ENCODE measurements at regions of chr3 and their contacts with region 1.

Region 1: GRCh38 chr3:20039766-20040475 is at the start of gene KAT2B:
- DNase-seq: no peak
- ATAC-seq: peak; percentile 76
- H3K4me3 ChIP-seq: peak within 1 kb of the TSS; percentile 54 to 66
- H3K27ac ChIP-seq: peak within 1 kb of the TSS; percentile 53; the same call in 1 of the 2 replicates
- H3K4me1 ChIP-seq: peaks cover 8 to 20% of the 10 kb centered on the region in 2 experiments; a peak in 3 of 4 replicates
- H3K27me3 ChIP-seq: no peaks in the 10 kb centered on the region
- CTCF ChIP-seq: peak in 2 of 3 experiments; percentile 50 to 56; a peak in 4 of 6 replicates
- POLR2A ChIP-seq: no peak
- RAD21 ChIP-seq: no peak
- total RNA-seq, gene KAT2B: 3.7 TPM

Region 2: DNA sequence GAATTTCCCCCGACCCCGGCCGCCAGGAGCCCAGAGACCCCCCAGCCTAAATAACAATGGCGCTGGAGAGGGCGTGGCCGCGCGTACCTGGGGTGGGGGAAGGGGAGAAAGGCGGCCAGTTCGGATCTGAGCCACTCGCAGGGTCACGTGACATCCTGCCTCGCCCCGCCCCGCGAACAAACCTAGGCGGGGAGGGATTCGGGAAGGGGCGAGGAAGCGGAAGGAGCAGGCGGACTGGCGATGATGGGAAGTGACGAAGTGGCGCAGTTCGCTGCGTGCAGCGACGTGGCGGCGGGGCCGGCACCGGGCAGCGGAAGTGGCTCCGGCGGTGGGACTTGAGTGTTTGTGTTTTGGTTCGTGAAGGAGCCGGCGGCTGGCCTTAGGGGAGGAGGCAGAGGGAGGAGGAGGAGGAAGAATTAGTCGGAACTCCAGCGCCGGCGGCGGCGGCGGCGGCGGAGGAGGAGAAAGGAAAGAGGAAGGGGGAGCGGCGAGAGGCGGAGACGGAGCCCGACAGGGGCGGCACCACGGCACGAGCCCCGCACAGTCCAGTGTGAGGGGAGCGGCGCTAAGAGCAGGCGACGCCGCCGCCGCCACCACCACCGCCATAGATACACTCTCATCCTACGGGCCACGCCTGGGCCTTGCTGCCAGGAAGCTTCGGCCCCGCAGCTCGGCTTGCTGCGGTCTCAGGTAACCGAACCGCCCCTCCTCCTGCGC is 92.9 kb before region 1 on chr3 and contains the start of gene RAB5A:
- CTCF ChIA-PET with region 1: no interaction called
- POLR2A ChIA-PET with region 1: interaction called, 3 read pairs
- RAD21 ChIA-PET with region 1: no interaction called
- intact Hi-C with region 1: loop called (anchors 1 kb)
- DNase-seq: peak; percentile 95
- ATAC-seq: peak; percentile 90
- H3K4me3 ChIP-seq: peak within 1 kb of the TSS; percentile 89 to 93
- H3K27ac ChIP-seq: peak within 1 kb of the TSS; percentile 96
- H3K4me1 ChIP-seq: peaks cover 7 to 14% of the 10 kb centered on the region in 2 experiments; a peak in 3 of 4 replicates
- H3K27me3 ChIP-seq: no peaks in the 10 kb centered on the region
- CTCF ChIP-seq: no peak
- POLR2A ChIP-seq: no peak
- RAD21 ChIP-seq: no peak
- total RNA-seq, gene RAB5A: 45.0 TPM

Region 3: DNA sequence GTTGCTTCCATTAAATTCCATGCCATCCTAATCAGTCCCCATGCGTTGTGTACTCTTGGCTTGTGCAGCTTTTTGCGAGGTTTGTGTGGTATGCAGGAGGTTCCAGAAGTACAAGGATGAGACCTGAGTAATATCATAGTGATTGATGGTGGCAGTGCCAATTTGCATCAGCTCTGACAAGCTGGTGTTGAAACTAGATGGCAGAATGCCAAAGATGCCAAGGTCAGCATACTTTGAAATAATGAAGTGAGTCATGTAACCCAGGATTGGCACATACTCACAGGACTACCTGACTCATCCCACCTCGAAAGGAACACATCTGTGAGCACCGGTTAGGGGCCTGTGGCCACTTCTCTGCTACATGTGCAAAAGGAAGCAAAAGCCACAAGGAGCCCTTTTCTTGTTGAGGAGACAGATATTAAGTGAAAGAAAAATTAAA is 14.6 kb after region 1 on chr3:
- CTCF ChIA-PET with region 1: no interaction called
- POLR2A ChIA-PET with region 1: no interaction called
- RAD21 ChIA-PET with region 1: interaction called in 1 of 2 experiments, 3 read pairs
- intact Hi-C with region 1: loop called (anchors 2 kb)
- DNase-seq: peak; percentile 95
- ATAC-seq: peak; percentile 96
- H3K4me3 ChIP-seq: no peak overlapping the region
- H3K27ac ChIP-seq: no peak overlapping the region
- H3K4me1 ChIP-seq: peaks cover 15 to 20% of the 10 kb centered on the region in 2 experiments
- H3K27me3 ChIP-seq: no peaks in the 10 kb centered on the region
- CTCF ChIP-seq: no peak
- POLR2A ChIP-seq: no peak
- RAD21 ChIP-seq: no peak; the same call in 1 of the 2 replicates

Measured in HCT116 (cell line).